ENCODE measurements at regions of chr12 and their contacts with region 1.

Region 1: DNA sequence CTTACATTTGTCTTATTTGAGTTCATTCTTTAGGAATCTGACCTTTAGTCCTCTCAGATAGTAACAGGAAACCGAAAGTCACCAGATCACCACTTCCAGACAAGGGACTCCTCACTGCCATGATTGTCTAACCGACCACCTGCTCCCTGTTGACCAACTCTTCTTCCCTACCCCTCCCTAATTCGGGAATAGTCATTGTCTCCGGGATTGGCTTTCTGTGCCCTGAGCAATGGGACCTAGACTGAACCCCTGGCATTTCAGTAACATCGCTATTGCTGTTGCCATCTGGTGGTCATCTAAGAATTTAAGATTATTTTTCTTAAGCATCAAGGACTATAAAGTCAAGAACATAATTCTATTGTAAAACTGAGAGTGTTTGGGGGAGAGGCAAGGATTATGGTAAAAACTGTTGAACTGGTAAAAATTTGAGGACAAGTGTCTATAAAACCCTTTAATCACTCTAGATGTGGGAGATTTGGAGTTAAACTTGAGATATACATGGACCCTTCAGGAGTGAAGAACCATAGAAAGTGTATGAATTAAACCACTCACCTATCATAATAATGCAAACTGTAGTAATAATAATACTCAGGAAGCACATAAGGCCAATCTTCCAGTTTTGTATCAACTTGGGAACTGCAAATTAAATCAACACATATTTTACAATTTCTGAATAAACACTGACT is 6.3 kb downstream of the CLEC2A start:
- DNase-seq: peak in 1 of 2 donors; percentile 49
- H3K4me3 ChIP-seq: peak overlapping the region in 3 of 4 donors; percentile 24 to 28 (median 24)
- H3K27ac ChIP-seq: no peak overlapping the region
- H3K4me1 ChIP-seq: no peaks in the 10 kb centered on the region
- H3K27me3 ChIP-seq: no peaks in the 10 kb centered on the region
- CTCF ChIP-seq: peak in 3 of 7 experiments; percentile 31 to 48 (median 48)
- EP300 ChIP-seq: no peak
- POLR2A ChIP-seq: no peak

Region 2: DNA sequence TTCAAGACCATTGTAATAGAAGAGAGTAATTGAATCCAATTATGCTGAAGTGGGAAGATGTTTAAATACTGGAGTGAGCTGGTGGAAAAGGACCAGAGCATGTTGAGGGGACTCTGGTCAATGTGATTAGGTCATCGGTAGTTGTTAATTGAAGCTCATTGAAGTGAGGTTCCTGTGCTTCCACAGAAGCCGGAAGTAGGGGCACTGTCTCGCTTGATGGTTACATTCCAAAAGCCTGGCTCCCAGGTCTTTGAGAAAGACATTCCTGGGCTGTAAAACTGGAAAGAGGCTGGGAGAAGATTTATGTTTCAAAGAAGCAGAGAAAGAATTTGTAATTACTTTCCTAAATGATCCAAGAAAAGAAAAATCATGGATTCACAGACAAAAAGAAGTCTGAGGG is 180.7 kb before region 1 on chr12:
- intact Hi-C with region 1: loop called (anchors 5 kb)
- DNase-seq: no peak
- H3K4me3 ChIP-seq: no peak overlapping the region
- H3K27ac ChIP-seq: no peak overlapping the region
- H3K4me1 ChIP-seq: peaks cover 0 to 9% (median 2%) of the 10 kb centered on the region in 4 donors
- H3K27me3 ChIP-seq: no peaks in the 10 kb centered on the region
- CTCF ChIP-seq: no peak
- EP300 ChIP-seq: no peak
- POLR2A ChIP-seq: no peak